T-cell (primary cell): ENCODE measurements at regions of chr2 and their contacts with region 1.

Region 1: GRCh38 chr2:143284087-143284675 is 155.0 kb downstream of the ARHGAP15 start:
- DNase-seq: peak in 24 of 35 experiments; percentile 3 to 71 (median 12)
- ATAC-seq: peak; percentile 66 to 75 (median 70)
- H3K4me3 ChIP-seq: no peak overlapping the region
- H3K4me3 Mint-ChIP-seq: no peak overlapping the region
- H3K27ac ChIP-seq: no peak overlapping the region
- H3K27ac Mint-ChIP-seq: peak overlapping the region in 1 of 2 donors; percentile 0
- H3K4me1 ChIP-seq: no peaks in the 10 kb centered on the region
- H3K4me1 Mint-ChIP-seq: peaks cover 51 to 69% (median 57%) of the 10 kb centered on the region in 3 donors
- H3K27me3 ChIP-seq: no peaks in the 10 kb centered on the region
- H3K27me3 Mint-ChIP-seq: no peaks in the 10 kb centered on the region

Region 2: DNA sequence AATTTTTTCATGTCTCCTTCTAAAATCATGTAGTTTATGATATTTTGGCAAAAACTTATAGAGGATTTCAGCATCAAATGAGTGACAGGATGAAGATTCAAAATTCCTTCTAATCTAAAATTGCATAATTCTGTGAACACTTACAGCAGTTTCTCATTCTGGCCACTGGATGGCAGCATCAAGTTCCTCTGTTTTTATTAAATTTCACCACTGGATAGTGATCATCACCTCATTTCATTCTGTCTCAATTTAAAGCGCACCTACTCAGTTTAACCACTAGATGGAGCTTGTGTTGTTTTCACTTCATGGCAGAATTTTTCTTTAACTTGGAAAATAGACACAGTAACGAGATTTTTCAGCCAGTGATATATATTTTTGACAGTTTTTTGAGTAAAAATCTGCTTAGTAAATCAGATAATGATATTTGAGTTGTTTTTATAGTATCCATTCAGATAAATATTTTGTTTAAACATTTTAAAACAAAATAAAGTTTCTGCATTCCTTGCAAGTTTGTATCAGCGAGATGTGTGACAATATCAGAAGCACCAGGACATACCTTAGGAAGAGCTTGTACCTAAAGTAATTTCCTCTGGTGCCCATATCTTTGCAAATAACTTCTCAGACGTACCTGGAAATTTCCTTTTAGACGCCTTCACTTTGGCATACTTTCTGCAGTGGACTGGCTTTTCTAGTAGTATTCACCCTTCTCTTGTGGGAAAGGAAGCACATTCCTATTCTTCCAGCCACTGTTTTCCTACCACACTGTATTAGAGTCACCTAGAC is 249.7 kb before region 1 on chr2:
- CTCF ChIA-PET with region 1: interaction called in 1 of 2 experiments, 13 read pairs
- POLR2A ChIA-PET with region 1: no interaction called
- DNase-seq: peak in 34 of 35 experiments; percentile 10 to 88 (median 45)
- ATAC-seq: peak; percentile 88 to 98 (median 96)
- H3K4me3 ChIP-seq: no peak overlapping the region
- H3K4me3 Mint-ChIP-seq: no peak overlapping the region
- H3K27ac ChIP-seq: no peak overlapping the region
- H3K27ac Mint-ChIP-seq: no peak overlapping the region
- H3K4me1 ChIP-seq: no peaks in the 10 kb centered on the region
- H3K4me1 Mint-ChIP-seq: peaks cover 0 to 6% (median 5%) of the 10 kb centered on the region in 3 donors
- H3K27me3 ChIP-seq: no peaks in the 10 kb centered on the region
- H3K27me3 Mint-ChIP-seq: peaks cover 0 to 2% of the 10 kb centered on the region in 2 donors

Region 3: GRCh38 chr2:143482316-143482715 is 198.1 kb after region 1 on chr2:
- CTCF ChIA-PET with region 1: no interaction called
- POLR2A ChIA-PET with region 1: no interaction called
- DNase-seq: no peak
- ATAC-seq: no peak
- H3K4me3 ChIP-seq: no peak overlapping the region
- H3K4me3 Mint-ChIP-seq: no peak overlapping the region
- H3K27ac ChIP-seq: no peak overlapping the region
- H3K27ac Mint-ChIP-seq: no peak overlapping the region
- H3K4me1 ChIP-seq: peaks cover 0 to 3% of the 10 kb centered on the region in 2 experiments
- H3K4me1 Mint-ChIP-seq: peaks cover 25 to 54% (median 48%) of the 10 kb centered on the region in 3 donors
- H3K27me3 ChIP-seq: no peaks in the 10 kb centered on the region
- H3K27me3 Mint-ChIP-seq: no peaks in the 10 kb centered on the region